ENCODE measurements at regions of chr5 and their contacts with region 1.

Region 1: GRCh38 chr5:122500245-122501075 is 188.4 kb downstream of the SNCAIP start:
- DNase-seq: peak; percentile 12 to 51 (median 34)
- ATAC-seq: peak; percentile 92
- H3K4me3 ChIP-seq: no peak overlapping the region
- H3K27ac ChIP-seq: no peak overlapping the region
- H3K4me1 ChIP-seq: no peaks in the 10 kb centered on the region
- H3K27me3 ChIP-seq: no peaks in the 10 kb centered on the region; a peak in 1 of 5 replicates
- CTCF ChIP-seq: peak; percentile 54 to 71 (median 63)
- EP300 ChIP-seq: no peak
- POLR2A ChIP-seq: no peak
- RAD21 ChIP-seq: peak in 1 of 2 experiments; percentile 57; a peak in 3 of 4 replicates

Region 2: GRCh38 chr5:122192497-122193496 is 307.7 kb before region 1 on chr5:
- CTCF ChIA-PET with region 1: no interaction called
- POLR2A ChIA-PET with region 1: no interaction called
- in situ Hi-C with region 1: loop called (anchors 10 kb)
- intact Hi-C with region 1: no loop called
- DNase-seq: peak; percentile 42 to 74 (median 48)
- ATAC-seq: peak; percentile 95
- H3K4me3 ChIP-seq: no peak overlapping the region
- H3K27ac ChIP-seq: no peak overlapping the region
- H3K4me1 ChIP-seq: peaks cover 0 to 5% of the 10 kb centered on the region in 2 experiments; a peak in 2 of 5 replicates
- H3K27me3 ChIP-seq: no peaks in the 10 kb centered on the region
- CTCF ChIP-seq: peak; percentile 44 to 68 (median 51); a peak in 4 of 6 replicates
- EP300 ChIP-seq: no peak
- POLR2A ChIP-seq: no peak
- RAD21 ChIP-seq: peak; percentile 46 to 65

Region 3: GRCh38 chr5:122295138-122295537 is 205.3 kb before region 1 on chr5:
- CTCF ChIA-PET with region 1: no interaction called
- POLR2A ChIA-PET with region 1: no interaction called
- in situ Hi-C with region 1: no loop called
- intact Hi-C with region 1: loop called (anchors 5 kb)
- DNase-seq: peak; percentile 12 to 22 (median 18)
- ATAC-seq: peak; percentile 85
- H3K4me3 ChIP-seq: no peak overlapping the region
- H3K27ac ChIP-seq: no peak overlapping the region
- H3K4me1 ChIP-seq: no peaks in the 10 kb centered on the region
- H3K27me3 ChIP-seq: no peaks in the 10 kb centered on the region
- CTCF ChIP-seq: peak; percentile 20 to 33 (median 27); a peak in 2 of 6 replicates
- EP300 ChIP-seq: no peak
- POLR2A ChIP-seq: no peak
- RAD21 ChIP-seq: no peak

Region 4: DNA sequence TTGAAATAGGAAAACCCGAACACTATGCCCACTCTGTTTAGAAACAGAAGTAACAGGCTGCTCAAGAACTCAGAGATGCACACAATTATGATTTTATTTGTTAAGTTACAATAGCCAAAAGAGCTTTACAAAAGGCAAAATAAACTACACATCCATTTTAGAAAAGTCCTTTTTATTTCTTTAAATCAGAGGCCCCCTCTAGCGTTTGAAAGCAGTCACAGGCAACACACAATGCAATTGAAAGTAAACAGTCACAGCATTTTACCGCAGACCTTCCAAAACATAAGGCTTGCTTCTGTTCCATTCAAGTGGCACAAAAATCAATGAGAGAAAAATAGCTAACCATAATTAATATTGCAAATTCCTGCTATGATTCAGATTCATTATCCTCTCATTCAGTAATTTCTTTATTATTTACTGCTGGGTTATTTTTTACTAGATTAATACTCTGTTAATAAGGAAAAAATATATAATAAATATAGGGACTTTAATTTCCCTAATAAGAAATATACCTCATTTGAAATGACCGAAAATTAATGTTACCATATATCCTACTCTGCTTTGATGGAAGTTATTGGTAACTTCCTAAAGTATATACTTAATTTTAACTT is 844.5 kb after region 1 on chr5:
- CTCF ChIA-PET with region 1: interaction called, 3 read pairs
- POLR2A ChIA-PET with region 1: no interaction called
- in situ Hi-C with region 1: loop called (anchors 25 kb)
- intact Hi-C with region 1: loop called (anchors 10 kb)
- DNase-seq: peak in 2 of 4 experiments; percentile 5 to 19
- ATAC-seq: peak; percentile 68
- H3K4me3 ChIP-seq: no peak overlapping the region
- H3K27ac ChIP-seq: no peak overlapping the region
- H3K4me1 ChIP-seq: no peaks in the 10 kb centered on the region
- H3K27me3 ChIP-seq: no peaks in the 10 kb centered on the region
- CTCF ChIP-seq: peak; percentile 35 to 60 (median 54); a peak in 5 of 6 replicates
- EP300 ChIP-seq: no peak
- POLR2A ChIP-seq: no peak
- RAD21 ChIP-seq: peak; percentile 27 to 60; a peak in 3 of 4 replicates

Measured in K562 (cell line).